Activated CD4-positive, alpha-beta T cell treated with anti-CD3 and anti-CD28 coated beads, Interleukin-2, amount 10 ng/mL, durations not matched to agents 24 days and 14 days (primary cell): ENCODE measurements at regions of chr1 and their contacts with region 1.

Region 1: DNA sequence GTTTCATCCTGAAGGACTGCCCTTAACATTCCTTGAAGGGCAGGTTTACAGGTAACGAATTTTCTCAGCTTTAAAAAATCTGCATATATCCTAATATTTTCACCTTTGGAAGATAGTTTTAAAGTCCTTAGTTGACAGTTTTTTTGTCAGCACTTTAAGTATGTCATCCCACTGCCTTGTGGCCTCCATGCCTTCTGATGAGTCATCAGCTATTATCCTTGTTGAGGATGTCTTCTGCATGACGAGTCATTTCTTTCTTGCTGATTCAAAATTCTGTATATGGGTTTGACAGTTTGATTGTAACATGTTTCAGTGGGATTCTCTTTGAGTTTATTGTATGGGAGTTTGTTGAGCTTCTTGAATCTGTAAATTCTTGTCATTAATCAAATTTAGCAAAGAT is 500.6 kb downstream of the DISC1 start:
- DNase-seq: no peak
- H3K4me3 Mint-ChIP-seq: no peak overlapping the region
- H3K27ac Mint-ChIP-seq: no peak overlapping the region
- H3K4me1 Mint-ChIP-seq: peaks cover 5% of the 10 kb centered on the region
- H3K27me3 Mint-ChIP-seq: peaks cover 22% of the 10 kb centered on the region

Region 2: GRCh38 chr1:232066521-232066920 is 60.7 kb before region 1 on chr1:
- intact Hi-C with region 1: no loop called
- DNase-seq: no peak
- H3K4me3 Mint-ChIP-seq: no peak overlapping the region
- H3K27ac Mint-ChIP-seq: no peak overlapping the region
- H3K4me1 Mint-ChIP-seq: no peaks in the 10 kb centered on the region
- H3K27me3 Mint-ChIP-seq: peaks cover 6% of the 10 kb centered on the region

Region 3: DNA sequence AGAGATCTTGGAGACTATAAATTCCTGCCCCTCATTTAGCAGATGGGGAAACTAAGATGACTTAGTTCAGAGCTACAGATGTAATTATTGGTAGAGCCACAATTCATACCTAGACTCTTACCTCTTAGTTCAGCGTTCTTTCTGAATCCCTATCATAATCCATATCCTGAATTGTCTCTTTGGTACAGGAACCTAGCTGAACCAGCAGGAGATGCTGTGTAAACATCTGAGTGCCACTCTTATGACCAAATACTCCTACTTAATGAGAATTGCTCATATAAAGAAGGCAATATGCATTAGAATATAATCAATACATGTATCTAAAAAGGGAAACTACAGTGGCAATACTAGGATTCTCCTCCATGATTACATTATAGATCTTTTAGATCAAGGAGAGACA is 43.7 kb after region 1 on chr1:
- intact Hi-C with region 1: loop called (anchors 1 kb)
- DNase-seq: no peak
- H3K4me3 Mint-ChIP-seq: no peak overlapping the region
- H3K27ac Mint-ChIP-seq: no peak overlapping the region
- H3K4me1 Mint-ChIP-seq: no peaks in the 10 kb centered on the region
- H3K27me3 Mint-ChIP-seq: peaks cover 1% of the 10 kb centered on the region